BJ (cell line): ENCODE measurements at regions of chr1 and their contacts with region 1.

Region 1: GRCh38 chr1:173954179-173954578 is 37.1 kb upstream of the SERPINC1 start:
- DNase-seq: no peak
- H3K4me3 ChIP-seq: no peak overlapping the region
- H3K27me3 ChIP-seq: no peaks in the 10 kb centered on the region
- CTCF ChIP-seq: no peak

Region 2: GRCh38 chr1:174301295-174302077 is 347.3 kb after region 1 on chr1:
- CTCF ChIA-PET with region 1: no interaction called
- POLR2A ChIA-PET with region 1: interaction called, 13 read pairs
- DNase-seq: no peak
- H3K4me3 ChIP-seq: no peak overlapping the region
- H3K27me3 ChIP-seq: no peaks in the 10 kb centered on the region
- CTCF ChIP-seq: no peak